ENCODE measurements at regions of chr11 and their contacts with region 1.

Region 1: DNA sequence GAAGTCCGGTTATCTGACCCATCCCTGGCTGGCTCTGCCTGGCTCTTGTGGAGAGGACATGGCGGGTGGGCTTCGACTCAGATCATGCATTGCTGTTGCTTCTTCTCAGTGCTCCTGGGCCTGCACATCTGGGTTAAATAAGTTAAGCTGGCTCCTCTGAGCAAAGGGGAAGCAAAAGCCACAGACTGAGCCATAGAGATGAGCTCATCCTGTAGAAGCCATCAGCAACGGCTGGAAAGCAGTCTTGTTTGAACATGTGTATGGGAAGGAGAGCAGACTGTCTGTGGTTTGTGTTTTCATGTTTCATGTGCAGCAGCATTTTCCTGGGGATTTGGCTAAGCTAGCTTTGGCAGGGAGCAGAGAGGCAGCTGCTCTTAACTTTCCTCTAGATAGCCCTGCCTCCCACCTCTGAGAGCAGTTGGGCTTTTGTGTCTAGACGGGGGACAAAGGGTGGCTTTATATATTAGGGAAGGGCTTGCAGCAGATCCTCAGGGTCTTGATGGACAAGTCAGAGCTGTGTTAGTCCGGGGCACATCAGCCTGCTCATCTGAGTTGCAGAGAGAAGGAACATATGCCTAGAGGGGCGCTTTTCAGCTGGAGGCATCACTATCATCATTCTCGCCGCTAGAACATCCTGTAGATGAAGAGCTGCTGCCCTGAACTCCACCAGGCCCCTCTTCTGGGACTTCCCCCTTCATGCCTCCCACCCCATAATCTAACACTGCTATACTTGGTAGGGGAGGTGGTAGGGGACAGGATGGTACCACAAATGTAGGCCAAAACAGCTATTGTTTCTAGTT is 14.9 kb downstream of the DCPS start:
- DNase-seq: peak; percentile 61
- ATAC-seq: peak; percentile 85
- H3K4me3 Mint-ChIP-seq: peak overlapping the region; percentile 65
- H3K27ac Mint-ChIP-seq: peak overlapping the region; percentile 95
- H3K4me1 Mint-ChIP-seq: peaks cover 37% of the 10 kb centered on the region
- H3K27me3 Mint-ChIP-seq: no peaks in the 10 kb centered on the region

Region 2: GRCh38 chr11:126090452-126090851 is 228.3 kb before region 1 on chr11:
- CTCF ChIA-PET with region 1: no interaction called
- POLR2A ChIA-PET with region 1: no interaction called
- DNase-seq: no peak
- ATAC-seq: no peak
- H3K4me3 Mint-ChIP-seq: no peak overlapping the region
- H3K27ac Mint-ChIP-seq: no peak overlapping the region
- H3K4me1 Mint-ChIP-seq: peaks cover 4% of the 10 kb centered on the region
- H3K27me3 Mint-ChIP-seq: peaks cover 7% of the 10 kb centered on the region

Region 3: GRCh38 chr11:126303623-126304456 is 14.9 kb before region 1 on chr11 and contains the start of gene DCPS:
- CTCF ChIA-PET with region 1: interaction called, 29 read pairs
- POLR2A ChIA-PET with region 1: interaction called, 18 read pairs
- DNase-seq: peak; percentile 88
- ATAC-seq: peak; percentile 99
- H3K4me3 Mint-ChIP-seq: peak within 1 kb of the TSS; percentile 81
- H3K27ac Mint-ChIP-seq: peak within 1 kb of the TSS; percentile 97
- H3K4me1 Mint-ChIP-seq: peaks cover 33% of the 10 kb centered on the region
- H3K27me3 Mint-ChIP-seq: no peaks in the 10 kb centered on the region
- total RNA-seq, gene DCPS: 21.8 to 22.5 TPM

Region 4: DNA sequence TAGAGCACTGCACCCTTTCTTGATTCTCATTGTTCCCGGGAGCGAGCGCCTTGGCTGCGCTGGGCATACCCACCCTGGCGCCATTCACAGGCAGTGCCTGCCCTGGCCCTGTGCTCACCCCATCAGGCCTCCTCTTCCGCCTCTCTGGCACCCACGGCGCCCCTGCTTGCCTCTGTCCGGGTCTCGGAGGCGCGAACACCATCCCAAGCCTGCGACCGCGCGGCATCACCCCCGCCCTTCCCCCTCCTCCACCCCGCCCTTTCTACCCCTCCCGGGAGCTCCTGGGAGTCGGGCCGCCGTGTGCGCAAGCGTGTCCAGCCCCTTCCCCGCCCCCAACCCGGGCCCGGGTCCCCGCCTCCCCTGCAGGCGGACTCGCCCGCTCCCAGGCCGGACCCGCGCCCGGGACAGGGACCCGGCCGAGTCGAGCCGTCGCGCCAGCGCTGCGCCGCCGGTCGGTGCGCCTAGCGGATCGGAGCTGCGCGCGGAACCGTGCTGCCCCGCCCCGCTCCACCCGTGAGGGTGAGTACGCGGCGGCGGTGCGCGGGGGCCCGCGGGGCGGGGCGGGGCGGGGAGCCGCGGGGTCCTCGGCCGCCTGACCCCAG is 36.7 kb after region 1 on chr11 and contains the start of gene ST3GAL4:
- CTCF ChIA-PET with region 1: interaction called, 14 read pairs
- POLR2A ChIA-PET with region 1: interaction called, 40 read pairs
- DNase-seq: peak; percentile 78
- ATAC-seq: peak; percentile 79
- H3K4me3 Mint-ChIP-seq: peak within 1 kb of the TSS; percentile 94
- H3K27ac Mint-ChIP-seq: peak within 1 kb of the TSS; percentile 90
- H3K4me1 Mint-ChIP-seq: peaks cover 51% of the 10 kb centered on the region
- H3K27me3 Mint-ChIP-seq: no peaks in the 10 kb centered on the region
- total RNA-seq, gene ST3GAL4: 10.3 to 11.8 TPM

Measured in activated CD8-positive, alpha-beta T cell treated with anti-CD3 and anti-CD28 coated beads, Interleukin-2, amount 10 ng/mL, durations not matched to agents 7 days and 5 days (primary cell).